Left lung (tissue), 14 donors: ENCODE measurements at regions of chr19 and their contacts with region 1.

Region 1: DNA sequence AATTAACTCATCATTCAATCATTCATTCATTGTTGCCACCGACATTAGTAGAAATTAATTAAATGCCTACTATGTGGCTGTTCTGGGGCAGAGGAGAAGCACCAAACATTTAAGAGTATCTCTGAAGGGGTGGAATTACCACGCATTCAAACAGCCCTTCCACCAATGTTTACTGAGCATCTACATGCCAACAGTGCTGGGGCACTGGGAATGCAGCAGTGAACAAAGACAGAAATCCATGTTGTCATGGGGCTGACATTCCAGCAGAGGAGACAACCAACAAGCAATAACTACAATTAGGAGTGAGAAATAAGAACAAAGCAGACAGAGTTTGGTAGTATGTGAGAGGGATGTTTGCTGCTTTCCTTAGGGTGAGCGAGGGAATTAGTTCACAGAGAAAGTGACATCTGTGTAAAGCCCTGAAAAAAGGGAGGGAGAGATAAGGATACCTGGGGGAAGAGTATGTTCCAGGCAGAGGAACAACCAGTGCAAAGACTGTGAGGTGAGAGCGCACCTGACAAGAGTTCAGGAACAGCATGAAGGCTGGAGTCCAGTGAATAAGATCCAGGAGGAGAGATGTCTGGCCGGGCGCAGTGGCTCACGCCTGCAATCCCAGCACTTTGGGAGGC is 1.3 kb upstream of the PAK4 start:
- DNase-seq: no peak
- ATAC-seq: no peak
- H3K4me3 ChIP-seq: no peak overlapping the region
- H3K27ac ChIP-seq: no peak overlapping the region
- H3K4me1 ChIP-seq: peaks cover 8 to 41% of the 10 kb centered on the region in 2 donors
- H3K27me3 ChIP-seq: peaks cover 0 to 4% of the 10 kb centered on the region in 2 donors
- CTCF ChIP-seq: no peak

Region 2: GRCh38 chr19:39187559-39187957 is 63.3 kb after region 1 on chr19:
- intact Hi-C with region 1: loop called in 1 of 2 experiments (anchors 5 kb)
- DNase-seq: no peak
- ATAC-seq: no peak
- H3K4me3 ChIP-seq: no peak overlapping the region
- H3K27ac ChIP-seq: no peak overlapping the region
- H3K4me1 ChIP-seq: no peaks in the 10 kb centered on the region
- H3K27me3 ChIP-seq: peaks cover 3 to 17% of the 10 kb centered on the region in 2 donors
- CTCF ChIP-seq: peak; percentile 15 to 47

Region 3: DNA sequence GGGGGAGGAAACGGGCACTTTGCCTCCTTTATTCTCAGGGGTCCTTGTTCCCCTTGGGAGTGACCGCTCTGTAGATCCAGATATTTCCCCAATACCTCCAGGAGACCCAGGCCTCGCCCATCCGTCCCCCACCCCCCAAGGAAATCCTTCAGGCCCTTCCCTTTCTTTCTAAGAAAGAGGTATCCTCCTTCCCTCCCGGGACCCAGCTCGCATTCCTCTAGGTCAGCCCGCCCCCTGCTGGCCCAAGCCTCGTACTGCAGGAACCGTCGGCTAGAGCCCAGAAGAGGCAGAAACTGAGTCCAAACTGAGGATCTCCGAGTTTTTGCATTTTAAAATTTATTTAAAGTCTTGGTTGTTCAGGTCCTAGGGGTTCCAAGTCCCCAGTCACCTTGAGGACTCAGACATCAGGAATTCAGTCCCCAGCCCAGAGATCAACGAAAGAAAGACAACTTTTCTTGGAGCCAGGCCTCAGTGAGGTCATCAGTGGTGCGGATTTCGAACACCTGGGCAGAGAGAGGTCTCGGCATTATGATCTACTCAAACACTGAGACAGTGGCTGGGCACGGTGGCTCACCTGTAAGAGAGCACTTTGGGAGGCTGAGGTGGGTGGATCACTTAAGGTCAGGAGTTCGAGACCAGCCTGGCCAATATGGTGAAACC is 203.9 kb after region 1 on chr19:
- intact Hi-C with region 1: loop called in 1 of 2 experiments (anchors 5 kb)
- DNase-seq: peak; percentile 63 to 96 (median 82)
- ATAC-seq: peak; percentile 98
- H3K4me3 ChIP-seq: no peak overlapping the region
- H3K27ac ChIP-seq: no peak overlapping the region
- H3K4me1 ChIP-seq: peaks cover 0 to 65% of the 10 kb centered on the region in 2 donors
- H3K27me3 ChIP-seq: no peaks in the 10 kb centered on the region
- CTCF ChIP-seq: peak; percentile 95 to 97

Region 4: GRCh38 chr19:39390755-39391592 is 266.7 kb after region 1 on chr19 and contains the starts of genes MED29 and PAF1:
- intact Hi-C with region 1: no loop called
- DNase-seq: peak; percentile 95 to 100 (median 98)
- ATAC-seq: peak; percentile 97
- H3K4me3 ChIP-seq: peak within 1 kb of the TSS; percentile 97 to 98
- H3K27ac ChIP-seq: peak within 1 kb of the TSS; percentile 93 to 97
- H3K4me1 ChIP-seq: peaks cover 5 to 27% of the 10 kb centered on the region in 2 donors
- H3K27me3 ChIP-seq: no peaks in the 10 kb centered on the region
- CTCF ChIP-seq: no peak
- polyA plus RNA-seq, gene MED29: 28.7 to 43.4 (median 34.3) TPM
- polyA plus RNA-seq, gene PAF1: 57.5 to 70.4 (median 67.0) TPM